Activated CD4-positive, alpha-beta T cell treated with anti-CD3 and anti-CD28 coated beads for 36 hours (primary cell): ENCODE measurements at regions of chr3 and their contacts with region 1.

Region 1: GRCh38 chr3:152222327-152222726 is 46.4 kb upstream of the MBNL1 start:
- DNase-seq: no peak
- ATAC-seq: peak; percentile 68
- H3K4me3 Mint-ChIP-seq: peak overlapping the region; percentile 4
- H3K27ac Mint-ChIP-seq: peak overlapping the region; percentile 77
- H3K4me1 Mint-ChIP-seq: peaks cover 70% of the 10 kb centered on the region
- H3K27me3 Mint-ChIP-seq: no peaks in the 10 kb centered on the region

Region 2: GRCh38 chr3:152232679-152233078 is 10.4 kb after region 1 on chr3:
- CTCF ChIA-PET with region 1: interaction called, 4 read pairs
- POLR2A ChIA-PET with region 1: no interaction called
- intact Hi-C with region 1: loop called in 1 of 2 experiments (anchors 1 kb)
- DNase-seq: no peak
- ATAC-seq: peak; percentile 69
- H3K4me3 Mint-ChIP-seq: no peak overlapping the region
- H3K27ac Mint-ChIP-seq: peak overlapping the region; percentile 82
- H3K4me1 Mint-ChIP-seq: peaks cover 86% of the 10 kb centered on the region
- H3K27me3 Mint-ChIP-seq: no peaks in the 10 kb centered on the region

Region 3: GRCh38 chr3:152260026-152260425 is 37.7 kb after region 1 on chr3:
- CTCF ChIA-PET with region 1: no interaction called
- POLR2A ChIA-PET with region 1: no interaction called
- intact Hi-C with region 1: no loop called
- DNase-seq: no peak
- ATAC-seq: no peak
- H3K4me3 Mint-ChIP-seq: peak overlapping the region; percentile 3
- H3K27ac Mint-ChIP-seq: peak overlapping the region; percentile 82
- H3K4me1 Mint-ChIP-seq: peaks cover 87% of the 10 kb centered on the region
- H3K27me3 Mint-ChIP-seq: no peaks in the 10 kb centered on the region